Mammary epithelial cell (primary cell): ENCODE measurements at regions of chr15 and their contacts with region 1.

Region 1: GRCh38 chr15:48963524-48964113 is at the start of gene SHC4:
- DNase-seq: peak; percentile 86
- H3K4me3 ChIP-seq: peak within 1 kb of the TSS; percentile 57 to 69 (median 58)
- H3K27ac ChIP-seq: peak within 1 kb of the TSS; percentile 43
- H3K4me1 ChIP-seq: peaks cover 44% of the 10 kb centered on the region
- H3K27me3 ChIP-seq: no peaks in the 10 kb centered on the region
- CTCF ChIP-seq: peak; percentile 6 to 49
- total RNA-seq, gene SHC4: 5.5 to 23.8 TPM

Region 2: GRCh38 chr15:48375767-48376166 is 587.9 kb before region 1 on chr15:
- CTCF ChIA-PET with region 1: no interaction called
- dilution Hi-C with region 1: no loop called
- in situ Hi-C with region 1: loop called in 1 of 2 experiments (anchors 25 kb)
- intact Hi-C with region 1: loop called (anchors 5 kb)
- DNase-seq: no peak
- H3K4me3 ChIP-seq: no peak overlapping the region
- H3K27ac ChIP-seq: no peak overlapping the region
- H3K4me1 ChIP-seq: peaks cover 6% of the 10 kb centered on the region
- H3K27me3 ChIP-seq: no peaks in the 10 kb centered on the region
- CTCF ChIP-seq: no peak

Region 3: GRCh38 chr15:48722764-48723661 is 240.6 kb before region 1 on chr15:
- CTCF ChIA-PET with region 1: no interaction called
- dilution Hi-C with region 1: no loop called
- in situ Hi-C with region 1: no loop called
- intact Hi-C with region 1: loop called (anchors 5 kb)
- DNase-seq: peak; percentile 91
- H3K4me3 ChIP-seq: no peak overlapping the region
- H3K27ac ChIP-seq: peak overlapping the region; percentile 80
- H3K4me1 ChIP-seq: peaks cover 17% of the 10 kb centered on the region
- H3K27me3 ChIP-seq: no peaks in the 10 kb centered on the region
- CTCF ChIP-seq: no peak

Region 4: GRCh38 chr15:48868536-48868935 is 95.1 kb before region 1 on chr15:
- CTCF ChIA-PET with region 1: interaction called, 7 read pairs
- dilution Hi-C with region 1: no loop called
- in situ Hi-C with region 1: loop called (anchors 5 kb)
- intact Hi-C with region 1: no loop called
- DNase-seq: peak; percentile 86
- H3K4me3 ChIP-seq: peak overlapping the region in 1 of 3 experiments; percentile 11
- H3K27ac ChIP-seq: peak overlapping the region; percentile 75
- H3K4me1 ChIP-seq: peaks cover 25% of the 10 kb centered on the region
- H3K27me3 ChIP-seq: no peaks in the 10 kb centered on the region
- CTCF ChIP-seq: no peak

Region 5: DNA sequence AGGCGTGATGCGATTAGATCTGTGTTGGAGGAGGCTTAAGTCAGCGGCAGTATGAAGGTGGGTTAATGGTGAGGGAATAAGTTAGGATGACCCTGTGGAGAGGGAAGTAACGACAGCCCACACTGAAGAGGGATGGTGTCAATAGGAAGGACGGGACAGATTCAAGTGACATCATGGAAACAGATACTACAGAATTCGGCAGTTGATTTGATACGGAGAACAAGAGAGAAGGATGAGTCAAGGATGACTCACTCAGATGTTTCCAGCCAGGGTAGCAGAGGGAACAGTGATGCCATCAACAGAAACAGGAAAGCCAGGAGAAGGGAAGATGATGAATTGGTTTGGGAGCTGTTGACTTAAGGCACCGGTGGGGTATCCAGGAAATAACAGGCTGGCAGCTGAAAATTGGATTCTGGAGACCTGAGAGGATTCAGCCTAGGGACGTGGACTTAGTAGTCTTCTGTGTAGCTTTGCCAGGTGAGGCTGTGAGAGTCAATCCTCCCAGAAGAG is 37.9 kb before region 1 on chr15:
- CTCF ChIA-PET with region 1: no interaction called
- dilution Hi-C with region 1: no loop called
- in situ Hi-C with region 1: no loop called
- intact Hi-C with region 1: loop called (anchors 2 kb)
- DNase-seq: peak; percentile 97
- H3K4me3 ChIP-seq: no peak overlapping the region
- H3K27ac ChIP-seq: peak overlapping the region; percentile 78
- H3K4me1 ChIP-seq: peaks cover 29% of the 10 kb centered on the region
- H3K27me3 ChIP-seq: no peaks in the 10 kb centered on the region
- CTCF ChIP-seq: no peak

Region 6: DNA sequence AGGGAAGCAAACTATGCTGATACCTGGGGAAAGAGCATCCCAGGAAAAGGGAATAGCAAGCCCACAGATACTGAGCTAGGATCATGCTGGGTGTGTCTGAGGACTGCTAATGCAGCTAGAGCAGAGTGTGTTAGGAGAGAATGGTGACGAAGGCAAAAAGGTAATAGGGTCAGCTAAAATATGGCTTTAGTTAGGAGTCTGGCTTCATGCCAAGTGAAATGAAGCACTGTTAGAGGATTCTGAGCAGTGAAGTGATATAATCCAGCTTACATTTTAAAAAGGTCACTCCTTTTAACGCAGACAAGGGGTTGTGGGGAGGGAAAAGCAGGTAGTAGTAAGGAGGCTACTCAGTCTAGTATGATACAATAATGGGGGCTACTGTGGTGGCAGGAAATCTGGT is 52.3 kb after region 1 on chr15:
- CTCF ChIA-PET with region 1: no interaction called
- dilution Hi-C with region 1: no loop called
- in situ Hi-C with region 1: no loop called
- intact Hi-C with region 1: no loop called
- DNase-seq: no peak
- H3K4me3 ChIP-seq: no peak overlapping the region
- H3K27ac ChIP-seq: no peak overlapping the region
- H3K4me1 ChIP-seq: no peaks in the 10 kb centered on the region
- H3K27me3 ChIP-seq: no peaks in the 10 kb centered on the region
- CTCF ChIP-seq: no peak

Region 7: GRCh38 chr15:49145651-49146609 is 182.3 kb after region 1 on chr15:
- CTCF ChIA-PET with region 1: no interaction called
- dilution Hi-C with region 1: no loop called
- in situ Hi-C with region 1: no loop called
- intact Hi-C with region 1: loop called (anchors 5 kb)
- DNase-seq: peak; percentile 52
- H3K4me3 ChIP-seq: peak overlapping the region in 1 of 3 experiments; percentile 17
- H3K27ac ChIP-seq: peak overlapping the region; percentile 15
- H3K4me1 ChIP-seq: no peaks in the 10 kb centered on the region
- H3K27me3 ChIP-seq: no peaks in the 10 kb centered on the region
- CTCF ChIP-seq: peak; percentile 69 to 79